PC-9 (cell line): ENCODE measurements at regions of chr17 and their contacts with region 1.

Region 1: DNA sequence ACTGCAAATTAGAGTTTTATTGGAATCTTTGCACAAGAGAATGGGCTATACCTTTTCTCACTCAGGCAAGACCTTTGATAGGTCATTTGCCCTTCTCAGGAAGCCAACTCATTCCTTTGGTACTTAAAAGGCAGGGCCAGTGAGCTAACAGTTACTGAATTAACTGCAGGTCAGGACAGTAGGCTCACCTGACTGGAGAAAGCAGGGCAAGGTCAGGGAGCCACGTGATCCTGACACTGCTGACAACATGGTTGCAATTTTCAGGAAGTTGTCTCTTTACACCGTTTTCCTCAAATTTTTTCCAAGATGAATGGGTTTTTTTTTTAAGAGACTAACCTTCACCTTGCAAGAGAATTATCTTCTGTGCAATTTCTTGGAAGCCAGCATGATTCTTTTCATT is 21.1 kb downstream of the CPSF4L start:
- DNase-seq: no peak
- H3K4me3 ChIP-seq: no peak overlapping the region
- H3K27ac ChIP-seq: no peak overlapping the region
- H3K4me1 ChIP-seq: no peaks in the 10 kb centered on the region
- H3K27me3 ChIP-seq: no peaks in the 10 kb centered on the region
- CTCF ChIP-seq: no peak

Region 2: DNA sequence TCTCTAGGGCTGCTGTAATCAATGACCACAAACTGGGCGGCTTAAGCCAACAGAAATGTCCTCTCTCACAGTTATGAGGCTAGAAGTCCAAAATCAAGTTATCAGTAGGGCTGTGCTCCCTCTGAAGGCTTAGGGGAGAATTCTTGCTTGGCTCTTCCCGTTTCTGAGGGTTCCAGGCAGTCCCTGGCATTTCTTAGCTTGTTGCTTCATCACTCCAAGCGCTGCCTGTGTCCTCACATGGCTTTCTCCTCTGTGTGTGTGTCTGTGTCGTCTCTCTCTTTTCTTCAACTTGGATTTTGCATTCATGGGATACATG is 84.9 kb after region 1 on chr17:
- CTCF ChIA-PET with region 1: no interaction called
- POLR2A ChIA-PET with region 1: interaction called, 11 read pairs
- intact Hi-C with region 1: no loop called
- DNase-seq: peak in 1 of 2 experiments; percentile 32
- H3K4me3 ChIP-seq: no peak overlapping the region
- H3K27ac ChIP-seq: no peak overlapping the region
- H3K4me1 ChIP-seq: no peaks in the 10 kb centered on the region
- H3K27me3 ChIP-seq: 0 out of 2 replicates have a peak, but pooled peaks cover 3% of the 10 kb centered on the region
- CTCF ChIP-seq: no peak

Region 3: GRCh38 chr17:73879987-73880386 is 639.4 kb after region 1 on chr17:
- CTCF ChIA-PET with region 1: no interaction called
- POLR2A ChIA-PET with region 1: no interaction called
- intact Hi-C with region 1: no loop called
- DNase-seq: no peak
- H3K4me3 ChIP-seq: no peak overlapping the region
- H3K27ac ChIP-seq: no peak overlapping the region
- H3K4me1 ChIP-seq: no peaks in the 10 kb centered on the region
- H3K27me3 ChIP-seq: peaks cover 75% of the 10 kb centered on the region
- CTCF ChIP-seq: no peak